ENCODE measurements at regions of chr2 and their contacts with region 1.

Region 1: DNA sequence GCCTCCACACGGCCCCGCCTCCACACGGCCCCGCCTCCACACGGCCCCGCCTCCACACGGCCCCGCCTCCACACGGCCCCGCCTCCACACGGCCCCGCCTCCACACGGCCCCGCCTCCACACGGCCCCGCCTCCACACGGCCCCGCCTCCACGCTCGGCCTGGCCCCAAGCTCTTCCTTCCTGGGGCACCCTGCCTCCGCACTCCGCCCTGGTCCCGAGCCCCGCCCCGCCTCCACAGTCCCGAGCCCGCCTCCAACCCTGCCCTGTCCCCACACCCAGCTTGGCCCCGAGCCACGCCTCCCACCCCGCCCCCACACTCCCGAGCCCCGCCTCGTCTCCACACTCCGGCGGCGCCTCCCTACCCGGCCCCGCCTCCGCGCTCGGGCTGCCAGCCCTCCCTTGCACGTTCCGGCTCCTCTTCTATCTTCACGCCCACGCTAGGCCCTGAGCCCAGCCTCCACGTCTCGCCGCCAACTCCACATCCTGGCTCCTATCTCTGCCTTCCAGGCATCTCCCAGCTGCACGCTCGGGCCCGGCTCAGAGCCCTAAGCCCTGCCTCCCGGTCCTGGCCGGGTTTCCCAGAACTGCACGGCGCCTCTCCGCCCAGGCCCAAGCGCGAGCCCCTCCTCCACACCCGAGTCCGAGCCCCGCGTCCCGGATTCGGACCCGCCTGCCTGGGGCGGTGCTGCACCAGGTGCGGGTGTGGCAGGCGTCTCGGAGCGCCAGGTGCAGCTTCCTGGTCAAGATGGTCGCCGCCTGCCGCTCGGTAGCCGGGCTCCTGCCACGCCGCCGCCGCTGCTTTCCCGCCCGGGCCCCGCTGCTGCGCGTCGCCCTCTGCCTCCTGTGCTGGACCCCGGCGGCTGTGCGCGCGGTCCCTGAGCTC is at the start of gene TMEM87B:
- DNase-seq: peak; percentile 93 to 98 (median 97)
- ATAC-seq: peak; percentile 67
- H3K4me3 ChIP-seq: peak within 1 kb of the TSS; percentile 92 to 95
- H3K4me3 Mint-ChIP-seq: peak within 1 kb of the TSS; percentile 96
- H3K27ac ChIP-seq: peak within 1 kb of the TSS; percentile 71 to 93
- H3K27ac Mint-ChIP-seq: peak within 1 kb of the TSS; percentile 97
- H3K4me1 ChIP-seq: peaks cover 19% of the 10 kb centered on the region
- H3K4me1 Mint-ChIP-seq: peaks cover 46% of the 10 kb centered on the region
- H3K27me3 ChIP-seq: no peaks in the 10 kb centered on the region
- H3K27me3 Mint-ChIP-seq: no peaks in the 10 kb centered on the region
- CTCF ChIP-seq: no peak
- total RNA-seq, gene TMEM87B: 5.4 to 7.5 TPM

Region 2: DNA sequence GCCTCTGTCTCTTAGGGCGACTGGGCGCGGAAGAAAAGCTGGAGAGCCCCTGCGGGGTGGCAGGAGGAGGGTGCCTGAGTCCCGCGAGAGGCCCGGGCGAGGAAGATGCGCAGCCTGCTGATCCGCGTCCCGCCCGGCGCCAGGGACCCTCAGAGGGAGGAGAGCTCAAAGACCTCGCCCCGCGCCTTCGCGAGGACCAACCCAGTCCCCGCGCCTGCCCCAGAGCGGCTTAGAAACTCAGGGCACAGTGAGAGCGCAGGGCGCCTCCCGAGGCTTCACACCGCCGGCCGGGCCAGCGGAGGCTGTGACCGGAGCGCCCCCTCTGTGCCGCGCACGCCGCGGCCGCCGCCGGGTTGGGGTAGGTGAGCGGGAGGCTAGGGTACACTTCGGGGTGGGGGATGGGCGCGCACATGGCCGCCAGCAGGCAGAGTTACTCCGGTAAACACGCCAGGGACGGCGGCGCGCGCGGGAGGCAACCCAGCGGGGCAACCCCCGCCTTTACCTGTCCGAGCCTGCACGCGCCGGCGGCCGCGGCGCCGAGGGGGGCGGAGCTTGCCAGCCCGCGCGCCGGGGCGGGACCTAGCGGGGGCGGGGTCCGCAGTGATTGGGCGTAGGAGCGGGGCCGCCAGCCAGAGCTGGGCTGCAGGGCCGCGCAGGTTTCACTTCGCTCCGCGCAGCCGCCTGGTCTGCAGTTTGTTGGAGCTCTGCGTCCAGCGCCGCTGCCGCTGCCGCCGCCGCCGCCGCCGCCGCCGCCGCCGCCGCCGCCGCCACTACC is 934.6 kb before region 1 on chr2 and contains the start of gene BCL2L11:
- CTCF ChIA-PET with region 1: no interaction called
- POLR2A ChIA-PET with region 1: no interaction called
- intact Hi-C with region 1: loop called (anchors 2 to 10 kb)
- DNase-seq: peak; percentile 81 to 94 (median 88)
- ATAC-seq: peak; percentile 71
- H3K4me3 ChIP-seq: peak within 1 kb of the TSS; percentile 90 to 91
- H3K4me3 Mint-ChIP-seq: peak within 1 kb of the TSS; percentile 90
- H3K27ac ChIP-seq: peak within 1 kb of the TSS; percentile 37 to 50
- H3K27ac Mint-ChIP-seq: peak within 1 kb of the TSS; percentile 72
- H3K4me1 ChIP-seq: peaks cover 48% of the 10 kb centered on the region
- H3K4me1 Mint-ChIP-seq: peaks cover 55% of the 10 kb centered on the region
- H3K27me3 ChIP-seq: peaks cover 23 to 43% of the 10 kb centered on the region in 2 experiments
- H3K27me3 Mint-ChIP-seq: peaks cover 24% of the 10 kb centered on the region
- CTCF ChIP-seq: no peak
- total RNA-seq, gene BCL2L11: 38.7 to 40.1 TPM

Region 3: GRCh38 chr2:112187805-112188596 is 132.9 kb after region 1 on chr2:
- CTCF ChIA-PET with region 1: no interaction called
- POLR2A ChIA-PET with region 1: no interaction called
- intact Hi-C with region 1: loop called (anchors 5 kb)
- DNase-seq: peak; percentile 30 to 85 (median 77)
- ATAC-seq: peak; percentile 82
- H3K4me3 ChIP-seq: peak overlapping the region; percentile 16 to 23
- H3K4me3 Mint-ChIP-seq: peak overlapping the region; percentile 59
- H3K27ac ChIP-seq: peak overlapping the region; percentile 72 to 94
- H3K27ac Mint-ChIP-seq: peak overlapping the region; percentile 100
- H3K4me1 ChIP-seq: peaks cover 31% of the 10 kb centered on the region
- H3K4me1 Mint-ChIP-seq: peaks cover 63% of the 10 kb centered on the region
- H3K27me3 ChIP-seq: no peaks in the 10 kb centered on the region
- H3K27me3 Mint-ChIP-seq: no peaks in the 10 kb centered on the region
- CTCF ChIP-seq: no peak

Region 4: DNA sequence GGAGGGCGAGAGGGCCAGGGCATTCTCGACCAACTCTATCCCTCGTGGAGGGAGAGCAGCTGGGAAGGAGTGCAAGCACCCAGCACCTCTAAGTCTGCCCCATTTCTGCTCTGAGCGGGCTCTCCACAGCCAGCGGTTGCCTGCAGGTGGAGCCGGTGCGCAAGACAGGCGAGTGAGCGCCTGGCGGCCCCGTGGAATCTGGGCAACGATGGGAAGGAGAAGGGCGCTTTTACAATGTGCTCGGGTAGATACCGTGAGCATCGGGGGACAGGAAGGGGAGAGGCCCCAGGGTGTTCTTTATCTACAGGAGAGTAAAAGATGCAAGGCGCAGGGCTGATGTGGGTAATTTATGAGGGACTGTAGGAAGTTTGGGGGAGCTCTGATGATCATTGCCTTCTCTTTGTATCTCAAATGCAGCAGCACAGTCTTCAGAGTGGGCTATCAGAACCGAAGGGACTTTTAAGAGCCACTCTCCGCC is 426.0 kb after region 1 on chr2:
- CTCF ChIA-PET with region 1: no interaction called
- POLR2A ChIA-PET with region 1: no interaction called
- intact Hi-C with region 1: loop called (anchors 1 kb)
- DNase-seq: peak; percentile 63 to 90 (median 84)
- ATAC-seq: peak; percentile 78
- H3K4me3 ChIP-seq: peak overlapping the region; percentile 56 to 87
- H3K4me3 Mint-ChIP-seq: peak overlapping the region; percentile 95
- H3K27ac ChIP-seq: peak overlapping the region; percentile 30 to 53
- H3K27ac Mint-ChIP-seq: peak overlapping the region; percentile 93
- H3K4me1 ChIP-seq: peaks cover 16% of the 10 kb centered on the region
- H3K4me1 Mint-ChIP-seq: peaks cover 21% of the 10 kb centered on the region
- H3K27me3 ChIP-seq: no peaks in the 10 kb centered on the region
- H3K27me3 Mint-ChIP-seq: no peaks in the 10 kb centered on the region
- CTCF ChIP-seq: peak; percentile 76

Region 5: DNA sequence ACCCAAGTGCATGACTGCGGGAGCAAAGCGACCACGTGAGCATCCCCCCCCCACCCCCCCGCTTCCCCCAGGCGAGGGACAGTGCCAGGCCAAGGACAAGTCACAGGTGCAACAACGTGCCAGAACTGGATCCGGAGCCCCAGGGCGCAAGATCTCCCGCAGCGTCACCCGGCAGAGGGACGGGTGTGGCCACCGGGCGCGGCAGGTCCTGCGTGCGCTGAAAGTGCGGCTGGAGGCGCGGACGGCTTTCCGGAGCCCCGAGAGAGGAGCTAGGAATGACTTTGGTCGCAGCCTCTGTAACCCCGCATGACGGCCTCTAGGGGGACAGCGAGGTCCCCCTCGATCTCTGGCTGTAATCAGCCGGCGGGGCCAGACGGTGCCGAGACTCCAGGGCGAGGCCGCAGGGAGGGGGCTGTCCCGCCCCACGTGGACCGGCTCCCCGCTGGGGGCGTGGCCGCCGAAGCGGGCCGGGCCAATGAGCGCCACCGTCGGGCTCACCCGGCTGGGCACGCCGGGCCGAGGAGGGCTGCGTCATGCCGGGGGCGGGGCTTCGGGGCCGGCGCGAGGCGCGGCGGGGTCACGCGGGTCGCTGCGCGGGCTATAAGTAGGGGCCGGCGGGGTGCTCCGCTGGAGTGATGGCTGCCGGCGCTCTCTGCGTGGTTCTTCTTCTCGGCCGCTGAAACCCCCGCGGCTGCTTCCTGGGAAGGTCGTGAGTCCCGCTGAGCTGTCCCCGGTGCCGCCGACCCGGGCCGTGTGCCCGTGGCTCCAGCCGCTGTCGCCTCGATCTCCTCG is 590.4 kb after region 1 on chr2 and contains the start of gene SLC20A1:
- CTCF ChIA-PET with region 1: no interaction called
- POLR2A ChIA-PET with region 1: no interaction called
- intact Hi-C with region 1: loop called (anchors 2 to 10 kb)
- DNase-seq: peak; percentile 96 to 100 (median 98)
- ATAC-seq: peak; percentile 91
- H3K4me3 ChIP-seq: peak within 1 kb of the TSS; percentile 84 to 90
- H3K4me3 Mint-ChIP-seq: peak within 1 kb of the TSS; percentile 85
- H3K27ac ChIP-seq: peak within 1 kb of the TSS; percentile 91
- H3K27ac Mint-ChIP-seq: peak within 1 kb of the TSS; percentile 89
- H3K4me1 ChIP-seq: peaks cover 50% of the 10 kb centered on the region
- H3K4me1 Mint-ChIP-seq: peaks cover 56% of the 10 kb centered on the region
- H3K27me3 ChIP-seq: no peaks in the 10 kb centered on the region
- H3K27me3 Mint-ChIP-seq: no peaks in the 10 kb centered on the region
- CTCF ChIP-seq: peak; percentile 55
- total RNA-seq, gene SLC20A1: 144 to 145 TPM

Region 6: DNA sequence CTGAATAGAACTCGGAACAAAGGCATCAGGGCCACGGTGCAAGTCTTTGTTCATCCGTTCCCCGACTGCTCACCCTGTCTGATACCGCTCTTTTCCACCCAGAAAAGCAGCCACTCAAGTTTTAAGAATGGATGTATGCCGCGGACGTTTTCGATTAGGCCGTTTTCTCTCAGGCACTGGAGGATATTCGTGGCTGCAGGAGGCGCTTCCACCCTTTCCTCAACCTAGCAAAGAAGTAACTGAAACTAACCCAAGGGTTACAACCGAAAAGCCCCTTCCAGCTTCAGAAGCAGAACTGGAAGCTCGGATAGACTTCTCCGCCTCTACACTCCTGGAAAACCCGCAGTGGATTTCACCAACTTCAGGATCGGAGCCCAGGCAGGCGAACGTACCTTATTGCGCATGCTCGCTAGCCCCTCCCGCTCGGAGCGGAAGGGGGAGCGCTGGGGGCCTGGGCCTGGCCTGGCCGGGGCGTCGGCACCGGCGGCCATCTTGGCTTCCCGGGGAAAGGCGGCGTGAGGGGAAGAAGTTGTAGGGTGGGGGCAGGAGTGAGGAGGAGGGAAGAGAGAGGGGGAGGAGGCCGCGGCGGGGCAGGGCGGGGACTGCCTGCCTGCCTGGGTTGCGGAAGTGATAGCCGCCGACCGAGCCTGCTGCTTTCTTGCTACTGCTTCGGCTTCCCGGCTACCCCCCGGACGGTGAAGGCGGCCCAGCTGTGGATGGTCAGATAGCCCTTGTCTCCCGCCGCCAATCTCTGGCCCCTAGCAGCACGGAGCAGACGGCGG is 1834.6 kb after region 1 on chr2 and contains the start of gene ACTR3:
- CTCF ChIA-PET with region 1: no interaction called
- POLR2A ChIA-PET with region 1: no interaction called
- intact Hi-C with region 1: loop called (anchors 5 to 10 kb)
- DNase-seq: peak; percentile 96 to 99 (median 98)
- ATAC-seq: peak; percentile 86
- H3K4me3 ChIP-seq: peak within 1 kb of the TSS; percentile 92 to 97
- H3K4me3 Mint-ChIP-seq: peak within 1 kb of the TSS; percentile 100
- H3K27ac ChIP-seq: peak within 1 kb of the TSS; percentile 69 to 98
- H3K27ac Mint-ChIP-seq: peak within 1 kb of the TSS; percentile 99
- H3K4me1 ChIP-seq: peaks cover 69% of the 10 kb centered on the region
- H3K4me1 Mint-ChIP-seq: peaks cover 81% of the 10 kb centered on the region
- H3K27me3 ChIP-seq: no peaks in the 10 kb centered on the region
- H3K27me3 Mint-ChIP-seq: no peaks in the 10 kb centered on the region
- CTCF ChIP-seq: no peak
- total RNA-seq, gene ACTR3: 121 to 122 TPM